MCF 10A (cell line): ENCODE measurements at regions of chr5 and their contacts with region 1.

Region 1: GRCh38 chr5:431001-431710 is 11.8 kb upstream of the EXOC3 start:
- DNase-seq: peak; percentile 61
- H3K4me3 Mint-ChIP-seq: no peak overlapping the region
- H3K27ac Mint-ChIP-seq: no peak overlapping the region
- H3K4me1 Mint-ChIP-seq: peaks cover 9% of the 10 kb centered on the region
- H3K27me3 Mint-ChIP-seq: no peaks in the 10 kb centered on the region
- CTCF ChIP-seq: peak; percentile 71

Region 2: DNA sequence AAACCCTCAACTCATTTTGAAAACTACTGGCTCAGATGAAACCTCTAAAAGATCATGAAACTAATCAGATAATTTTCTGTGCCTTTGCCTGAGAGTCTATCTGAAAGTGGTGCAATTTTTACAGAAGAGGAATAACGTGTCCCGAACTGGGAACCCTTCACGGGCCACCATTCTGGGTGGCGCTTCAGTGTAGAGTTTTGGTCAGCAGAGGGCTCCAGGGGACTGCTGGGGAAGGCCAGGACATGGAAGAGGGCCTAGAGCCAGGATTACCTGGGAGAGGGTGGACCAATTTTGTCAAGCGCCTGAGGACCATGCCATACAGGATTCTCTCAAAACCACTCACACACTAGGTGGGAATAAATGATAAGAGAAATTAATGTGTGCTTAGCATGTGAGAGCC is 388.9 kb before region 1 on chr5:
- CTCF ChIA-PET with region 1: no interaction called
- POLR2A ChIA-PET with region 1: no interaction called
- intact Hi-C with region 1: loop called (anchors 1 kb)
- DNase-seq: peak; percentile 42
- H3K4me3 Mint-ChIP-seq: no peak overlapping the region
- H3K27ac Mint-ChIP-seq: no peak overlapping the region
- H3K4me1 Mint-ChIP-seq: peaks cover 3% of the 10 kb centered on the region
- H3K27me3 Mint-ChIP-seq: peaks cover 42% of the 10 kb centered on the region
- CTCF ChIP-seq: peak; percentile 50

Region 3: GRCh38 chr5:78004-78804 is 353.0 kb before region 1 on chr5:
- CTCF ChIA-PET with region 1: no interaction called
- POLR2A ChIA-PET with region 1: no interaction called
- intact Hi-C with region 1: loop called (anchors 1 kb)
- DNase-seq: peak; percentile 69
- H3K4me3 Mint-ChIP-seq: no peak overlapping the region
- H3K27ac Mint-ChIP-seq: no peak overlapping the region
- H3K4me1 Mint-ChIP-seq: no peaks in the 10 kb centered on the region
- H3K27me3 Mint-ChIP-seq: peaks cover 90% of the 10 kb centered on the region
- CTCF ChIP-seq: peak; percentile 62

Region 4: GRCh38 chr5:252546-252945 is 178.6 kb before region 1 on chr5:
- CTCF ChIA-PET with region 1: no interaction called
- POLR2A ChIA-PET with region 1: no interaction called
- intact Hi-C with region 1: no loop called
- DNase-seq: no peak
- H3K4me3 Mint-ChIP-seq: no peak overlapping the region
- H3K27ac Mint-ChIP-seq: no peak overlapping the region
- H3K4me1 Mint-ChIP-seq: no peaks in the 10 kb centered on the region
- H3K27me3 Mint-ChIP-seq: no peaks in the 10 kb centered on the region
- CTCF ChIP-seq: no peak

Region 5: GRCh38 chr5:317086-317811 is 113.9 kb before region 1 on chr5:
- CTCF ChIA-PET with region 1: interaction called, 94 read pairs
- POLR2A ChIA-PET with region 1: interaction called, 3 read pairs
- intact Hi-C with region 1: loop called (anchors 1 kb)
- DNase-seq: peak; percentile 75
- H3K4me3 Mint-ChIP-seq: no peak overlapping the region
- H3K27ac Mint-ChIP-seq: no peak overlapping the region
- H3K4me1 Mint-ChIP-seq: no peaks in the 10 kb centered on the region
- H3K27me3 Mint-ChIP-seq: no peaks in the 10 kb centered on the region
- CTCF ChIP-seq: peak; percentile 66